Activated CD4-positive, alpha-beta T cell treated with anti-CD3 and anti-CD28 coated beads, Interleukin-2, amount 10 ng/mL, durations not matched to agents 24 days and 14 days (primary cell): ENCODE measurements at regions of chr1 and their contacts with region 1.

Region 1: GRCh38 chr1:218377143-218377660 is 32.1 kb downstream of the TGFB2 start:
- DNase-seq: peak; percentile 82
- H3K4me3 Mint-ChIP-seq: peak overlapping the region; percentile 34
- H3K27ac Mint-ChIP-seq: peak overlapping the region; percentile 88
- H3K4me1 Mint-ChIP-seq: peaks cover 11% of the 10 kb centered on the region
- H3K27me3 Mint-ChIP-seq: peaks cover 49% of the 10 kb centered on the region

Region 2: GRCh38 chr1:217718881-217719280 is 658.3 kb before region 1 on chr1:
- intact Hi-C with region 1: no loop called
- DNase-seq: no peak
- H3K4me3 Mint-ChIP-seq: no peak overlapping the region
- H3K27ac Mint-ChIP-seq: no peak overlapping the region
- H3K4me1 Mint-ChIP-seq: no peaks in the 10 kb centered on the region
- H3K27me3 Mint-ChIP-seq: no peaks in the 10 kb centered on the region

Region 3: GRCh38 chr1:218351391-218352074 is 25.7 kb before region 1 on chr1:
- intact Hi-C with region 1: loop called (anchors 1 kb)
- DNase-seq: peak; percentile 61
- H3K4me3 Mint-ChIP-seq: peak overlapping the region; percentile 34
- H3K27ac Mint-ChIP-seq: no peak overlapping the region
- H3K4me1 Mint-ChIP-seq: peaks cover 16% of the 10 kb centered on the region
- H3K27me3 Mint-ChIP-seq: peaks cover 58% of the 10 kb centered on the region

Region 4: DNA sequence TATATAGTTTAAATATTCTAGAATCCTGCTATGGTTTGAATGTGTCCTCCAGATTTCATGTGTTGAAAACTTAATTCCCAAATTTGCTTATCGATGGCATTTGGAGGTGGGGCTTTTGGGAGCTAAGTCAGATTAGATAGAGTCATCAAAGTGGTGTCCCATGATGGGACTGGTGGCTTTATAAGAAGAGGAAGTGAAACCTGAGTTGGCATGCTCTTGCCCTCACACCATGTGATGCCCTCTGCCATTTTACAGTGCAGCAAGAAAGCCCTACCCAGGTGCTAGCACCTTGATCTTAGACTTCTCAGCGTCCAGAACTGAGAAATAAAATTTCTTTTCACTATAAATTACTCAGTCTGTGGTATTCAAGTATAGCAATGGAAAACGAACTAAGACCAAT is 79.2 kb after region 1 on chr1:
- intact Hi-C with region 1: no loop called
- DNase-seq: no peak
- H3K4me3 Mint-ChIP-seq: no peak overlapping the region
- H3K27ac Mint-ChIP-seq: no peak overlapping the region
- H3K4me1 Mint-ChIP-seq: no peaks in the 10 kb centered on the region
- H3K27me3 Mint-ChIP-seq: no peaks in the 10 kb centered on the region

Region 5: DNA sequence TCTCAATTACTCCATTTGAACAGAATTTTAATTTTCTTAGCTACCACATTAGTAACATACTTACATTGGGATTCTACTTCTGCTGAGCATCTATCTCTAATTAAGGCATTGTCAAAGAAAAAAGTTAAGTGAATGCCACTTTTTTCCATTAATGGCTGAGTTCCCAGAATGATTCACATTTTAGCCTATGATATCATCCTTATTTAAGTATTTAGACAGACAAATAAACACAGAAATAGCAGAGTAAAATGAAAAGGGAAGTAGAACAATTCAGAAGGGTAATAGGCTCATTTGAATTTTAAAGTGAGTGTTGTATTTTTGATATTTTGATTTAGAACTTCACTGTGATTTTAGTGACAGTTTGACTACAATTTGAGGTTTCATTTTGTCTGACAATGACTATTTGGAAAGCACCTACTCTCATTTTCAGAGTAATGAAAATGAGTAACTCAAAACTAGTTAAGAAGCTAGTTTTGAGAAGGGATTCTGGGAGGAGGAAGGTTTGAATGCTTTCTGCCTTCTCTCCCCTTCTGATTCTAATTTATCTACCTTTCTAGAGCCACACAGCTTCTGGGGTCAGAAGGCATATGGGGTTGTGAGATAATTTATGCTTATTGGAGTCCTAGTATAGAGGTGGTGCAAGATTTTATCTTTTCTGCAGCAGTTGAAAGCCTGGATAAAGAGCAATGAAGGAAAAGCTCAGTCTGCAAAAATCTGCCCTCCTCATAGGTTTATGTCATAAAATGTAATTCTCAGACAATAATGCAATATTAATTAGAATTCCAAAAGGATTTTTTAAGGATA is 812.0 kb after region 1 on chr1:
- intact Hi-C with region 1: loop called (anchors 10 kb)
- DNase-seq: no peak
- H3K4me3 Mint-ChIP-seq: peak overlapping the region; percentile 47
- H3K27ac Mint-ChIP-seq: peak overlapping the region; percentile 78
- H3K4me1 Mint-ChIP-seq: peaks cover 19% of the 10 kb centered on the region
- H3K27me3 Mint-ChIP-seq: no peaks in the 10 kb centered on the region